ENCODE measurements at regions of chr17 and their contacts with region 1.

Region 1: DNA sequence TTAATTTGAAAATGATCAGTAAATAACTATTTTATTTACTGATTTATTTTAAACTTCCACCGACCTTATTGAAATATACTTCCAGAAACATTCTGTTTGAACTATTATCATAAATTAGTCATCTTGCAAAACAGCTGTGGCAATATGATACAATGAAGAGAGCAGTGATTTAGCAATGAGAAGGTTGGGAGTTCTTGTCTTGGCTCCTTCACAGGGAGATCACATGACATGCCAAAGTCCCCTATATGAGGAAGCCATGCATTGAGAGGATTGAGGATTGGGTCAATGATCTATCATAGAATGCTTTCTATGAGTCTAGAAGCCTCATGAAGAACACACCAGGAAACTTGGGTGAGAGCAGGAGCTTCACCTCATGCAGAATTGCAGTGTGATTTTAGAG is 222.7 kb downstream of the LGALS9B start:
- DNase-seq: no peak

Region 2: GRCh38 chr17:20300436-20300934 is 55.8 kb after region 1 on chr17:
- intact Hi-C with region 1: loop called in 1 of 2 experiments (anchors 10 kb)
- DNase-seq: no peak

Region 3: DNA sequence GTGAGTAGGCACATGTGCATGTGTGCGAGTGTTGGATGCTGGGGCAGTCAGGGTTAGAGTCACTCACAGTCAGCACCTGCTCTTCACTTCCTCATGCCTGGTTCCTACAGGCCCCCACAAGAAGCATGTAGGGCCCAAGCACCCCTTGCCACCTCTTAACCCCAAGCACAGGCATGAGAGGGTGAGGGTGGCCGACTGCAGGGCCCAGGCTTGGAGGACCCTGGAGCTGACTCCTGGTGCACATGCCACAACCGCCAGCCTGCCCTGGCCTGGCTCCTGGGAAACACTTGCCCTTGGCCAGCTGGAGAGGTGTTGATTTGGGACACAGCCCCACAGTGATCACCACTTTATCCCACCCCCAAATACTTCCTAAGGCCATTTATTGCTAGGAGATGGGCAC is 317.9 kb after region 1 on chr17:
- intact Hi-C with region 1: loop called in 1 of 2 experiments (anchors 5 kb)
- DNase-seq: no peak

Measured in posterior vena cava (tissue), 2 donors.